ENCODE measurements at regions of chr6 and their contacts with region 1.

Region 1: GRCh38 chr6:32763427-32763826 is at the start of gene HLA-DQB2:
- DNase-seq: no peak
- ATAC-seq: no peak
- H3K4me3 ChIP-seq: no peak within 1 kb of the TSS
- H3K27ac ChIP-seq: no peak within 1 kb of the TSS
- H3K4me1 ChIP-seq: no peaks in the 10 kb centered on the region
- H3K27me3 ChIP-seq: no peaks in the 10 kb centered on the region
- CTCF ChIP-seq: no peak
- total RNA-seq, gene HLA-DQB2: 0.35 to 3.8 (median 0.47) TPM in 5 of 6 donors, not detected in the other

Region 2: GRCh38 chr6:32666420-32667300 is 96.8 kb before region 1 on chr6 and contains the start of gene HLA-DQB1:
- intact Hi-C with region 1: loop called in 1 of 3 experiments (anchors 10 kb)
- DNase-seq: peak in 1 of 6 donors; percentile 19
- ATAC-seq: peak; percentile 69 to 93 (median 80)
- H3K4me3 ChIP-seq: no peak within 1 kb of the TSS
- H3K27ac ChIP-seq: no peak within 1 kb of the TSS
- H3K4me1 ChIP-seq: no peaks in the 10 kb centered on the region
- H3K27me3 ChIP-seq: no peaks in the 10 kb centered on the region
- CTCF ChIP-seq: no peak
- total RNA-seq, gene HLA-DQB1: 0.63 to 17.6 (median 3.3) TPM

Region 3: GRCh38 chr6:33430991-33431879 is 667.8 kb after region 1 on chr6:
- intact Hi-C with region 1: no loop called
- DNase-seq: no peak
- ATAC-seq: peak in 1 of 4 donors; percentile 36
- H3K4me3 ChIP-seq: no peak overlapping the region
- H3K27ac ChIP-seq: no peak overlapping the region
- H3K4me1 ChIP-seq: peaks cover 0 to 4% (median 0%) of the 10 kb centered on the region in 3 donors
- H3K27me3 ChIP-seq: no peaks in the 10 kb centered on the region
- CTCF ChIP-seq: no peak